ENCODE measurements at regions of chr17 and their contacts with region 1.

Region 1: GRCh38 chr17:74354123-74354522 is 7.5 kb downstream of the BTBD17 start:
- DNase-seq: peak in 1 of 2 experiments; percentile 92
- H3K4me3 ChIP-seq: no peak overlapping the region; a peak in 2 of 8 replicates
- H3K27ac ChIP-seq: no peak overlapping the region
- H3K4me1 ChIP-seq: peaks cover 0 to 8% (median 6%) of the 10 kb centered on the region in 4 experiments; a peak in 5 of 7 replicates
- H3K27me3 ChIP-seq: peaks cover 16 to 49% (median 33%) of the 10 kb centered on the region in 4 experiments
- CTCF ChIP-seq: peak; percentile 99 to 100 (median 100)
- EP300 ChIP-seq: no peak
- POLR2A ChIP-seq: no peak
- RAD21 ChIP-seq: peak; percentile 66 to 79

Region 2: GRCh38 chr17:74296548-74296936 is 57.6 kb before region 1 on chr17:
- CTCF ChIA-PET with region 1: interaction called, 114 read pairs
- POLR2A ChIA-PET with region 1: no interaction called
- DNase-seq: peak; percentile 23 to 58
- H3K4me3 ChIP-seq: no peak overlapping the region
- H3K27ac ChIP-seq: no peak overlapping the region
- H3K4me1 ChIP-seq: no peaks in the 10 kb centered on the region
- H3K27me3 ChIP-seq: no peaks in the 10 kb centered on the region; a peak in 1 of 7 replicates
- CTCF ChIP-seq: peak; percentile 60 to 80 (median 76)
- EP300 ChIP-seq: no peak
- POLR2A ChIP-seq: no peak
- RAD21 ChIP-seq: peak; percentile 43 to 70; a peak in 3 of 4 replicates

Region 3: GRCh38 chr17:74316220-74316619 is 37.9 kb before region 1 on chr17:
- CTCF ChIA-PET with region 1: interaction called, 13 read pairs
- POLR2A ChIA-PET with region 1: interaction called, 3 read pairs
- DNase-seq: no peak
- H3K4me3 ChIP-seq: no peak overlapping the region
- H3K27ac ChIP-seq: no peak overlapping the region
- H3K4me1 ChIP-seq: no peaks in the 10 kb centered on the region
- H3K27me3 ChIP-seq: no peaks in the 10 kb centered on the region; a peak in 1 of 7 replicates
- CTCF ChIP-seq: no peak
- EP300 ChIP-seq: no peak
- POLR2A ChIP-seq: no peak
- RAD21 ChIP-seq: no peak

Region 4: GRCh38 chr17:74332763-74333283 is 21.3 kb before region 1 on chr17:
- CTCF ChIA-PET with region 1: interaction called, 55 read pairs
- POLR2A ChIA-PET with region 1: no interaction called
- DNase-seq: no peak
- H3K4me3 ChIP-seq: no peak overlapping the region
- H3K27ac ChIP-seq: no peak overlapping the region
- H3K4me1 ChIP-seq: peaks cover 3 to 13% (median 3%) of the 10 kb centered on the region in 4 experiments; a peak in 5 of 7 replicates
- H3K27me3 ChIP-seq: peaks cover 0 to 4% (median 3%) of the 10 kb centered on the region in 4 experiments; a peak in 3 of 7 replicates
- CTCF ChIP-seq: no peak
- EP300 ChIP-seq: no peak
- POLR2A ChIP-seq: no peak
- RAD21 ChIP-seq: no peak

Region 5: DNA sequence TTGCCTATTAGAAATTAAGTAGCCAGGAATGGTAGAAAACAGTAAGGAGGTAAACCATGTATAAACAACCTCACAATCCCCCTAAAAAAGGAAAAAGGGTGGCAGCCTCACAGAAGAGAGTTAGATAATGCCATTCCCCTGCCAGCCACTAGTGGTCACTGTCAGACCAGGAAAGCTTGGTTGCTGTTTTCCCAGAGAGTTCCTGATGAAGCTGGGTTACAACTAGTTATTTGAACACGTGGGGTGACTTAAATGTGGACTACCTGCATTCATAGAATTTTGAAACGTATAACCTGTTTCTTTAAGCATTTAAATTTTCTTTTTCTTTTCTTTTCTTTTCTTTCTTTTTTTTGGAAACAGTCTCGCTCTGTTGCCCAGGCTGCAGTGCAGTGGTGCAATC is 83.6 kb after region 1 on chr17:
- CTCF ChIA-PET with region 1: interaction called, 14 read pairs
- POLR2A ChIA-PET with region 1: no interaction called
- DNase-seq: no peak
- H3K4me3 ChIP-seq: no peak overlapping the region
- H3K27ac ChIP-seq: no peak overlapping the region
- H3K4me1 ChIP-seq: peaks cover 5 to 16% (median 12%) of the 10 kb centered on the region in 4 experiments
- H3K27me3 ChIP-seq: peaks cover 0 to 7% (median 3%) of the 10 kb centered on the region in 4 experiments; a peak in 3 of 7 replicates
- CTCF ChIP-seq: peak; percentile 73 to 97 (median 88)
- EP300 ChIP-seq: no peak
- POLR2A ChIP-seq: no peak
- RAD21 ChIP-seq: peak; percentile 96

Measured in H1 (cell line).